ENCODE measurements at regions of chr2 and their contacts with region 1.

Region 1: DNA sequence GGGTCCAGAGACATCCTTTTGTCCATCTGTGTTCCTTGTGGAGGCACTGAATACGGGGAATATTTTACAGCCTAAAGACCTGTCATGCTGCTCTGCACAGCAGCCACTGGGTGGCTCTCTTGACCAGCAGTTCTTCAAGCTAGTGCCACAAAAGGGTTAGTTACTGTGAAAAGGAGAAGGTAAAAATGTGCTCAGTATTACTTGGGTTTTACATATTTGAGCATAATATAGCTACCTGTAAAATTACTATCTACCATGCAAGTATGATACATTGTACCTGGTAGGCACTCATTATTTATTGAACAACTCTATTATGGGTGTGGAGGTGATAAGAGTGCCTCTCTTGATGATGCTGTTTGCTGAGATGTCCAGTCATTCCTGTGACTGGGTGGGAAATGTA is 23.6 kb downstream of the FZD5 start:
- DNase-seq: no peak
- ATAC-seq: peak; percentile 97
- H3K4me3 ChIP-seq: no peak overlapping the region
- H3K27ac ChIP-seq: no peak overlapping the region
- H3K4me1 ChIP-seq: no peaks in the 10 kb centered on the region
- H3K27me3 ChIP-seq: no peaks in the 10 kb centered on the region
- CTCF ChIP-seq: peak; percentile 91 to 93 (median 91)
- EP300 ChIP-seq: no peak
- POLR2A ChIP-seq: no peak
- RAD21 ChIP-seq: peak; percentile 100

Region 2: DNA sequence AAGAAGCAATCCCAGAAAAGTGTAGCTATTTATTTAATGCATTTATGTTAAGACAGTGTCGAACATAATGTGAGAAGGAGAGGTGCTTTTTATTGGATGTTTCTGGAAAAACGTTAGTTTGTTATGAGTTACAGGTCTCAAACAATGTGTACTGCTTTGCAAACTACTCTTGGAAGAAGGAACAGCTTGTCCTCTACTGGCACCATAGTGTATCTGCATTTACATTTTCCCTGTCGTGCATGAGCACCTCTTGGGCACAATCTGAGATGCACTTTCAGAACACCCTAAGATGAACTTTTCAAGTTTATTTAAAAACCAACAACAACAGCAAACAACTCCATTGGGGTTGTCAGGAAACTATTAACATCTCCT is 11.9 kb before region 1 on chr2:
- CTCF ChIA-PET with region 1: interaction called, 19 read pairs
- POLR2A ChIA-PET with region 1: no interaction called
- RAD21 ChIA-PET with region 1: interaction called, 13 read pairs
- SMC1A ChIA-PET with region 1: interaction called, 17 read pairs
- in situ Hi-C with region 1: no loop called
- intact Hi-C with region 1: no loop called
- DNase-seq: no peak
- ATAC-seq: peak; percentile 55
- H3K4me3 ChIP-seq: no peak overlapping the region
- H3K27ac ChIP-seq: no peak overlapping the region
- H3K4me1 ChIP-seq: no peaks in the 10 kb centered on the region
- H3K27me3 ChIP-seq: no peaks in the 10 kb centered on the region
- CTCF ChIP-seq: peak; percentile 42 to 58 (median 46); a peak in 4 of 6 replicates
- EP300 ChIP-seq: no peak
- POLR2A ChIP-seq: no peak
- RAD21 ChIP-seq: peak; percentile 58

Region 3: GRCh38 chr2:207833251-207833751 is 87.2 kb after region 1 on chr2:
- CTCF ChIA-PET with region 1: no interaction called
- POLR2A ChIA-PET with region 1: no interaction called
- RAD21 ChIA-PET with region 1: no interaction called
- SMC1A ChIA-PET with region 1: no interaction called
- in situ Hi-C with region 1: no loop called
- intact Hi-C with region 1: no loop called
- DNase-seq: peak; percentile 31
- ATAC-seq: peak; percentile 99
- H3K4me3 ChIP-seq: no peak overlapping the region
- H3K27ac ChIP-seq: no peak overlapping the region
- H3K4me1 ChIP-seq: peaks cover 11% of the 10 kb centered on the region
- H3K27me3 ChIP-seq: no peaks in the 10 kb centered on the region
- CTCF ChIP-seq: no peak
- EP300 ChIP-seq: no peak
- POLR2A ChIP-seq: no peak
- RAD21 ChIP-seq: no peak

Region 4: GRCh38 chr2:207974216-207974605 is 228.1 kb after region 1 on chr2:
- CTCF ChIA-PET with region 1: interaction called, 183 read pairs
- POLR2A ChIA-PET with region 1: interaction called, 4 read pairs
- RAD21 ChIA-PET with region 1: interaction called, 115 read pairs
- SMC1A ChIA-PET with region 1: interaction called, 190 read pairs
- in situ Hi-C with region 1: loop called (anchors 10 kb)
- intact Hi-C with region 1: loop called (anchors 1 kb)
- DNase-seq: no peak
- ATAC-seq: no peak
- H3K4me3 ChIP-seq: no peak overlapping the region
- H3K27ac ChIP-seq: no peak overlapping the region
- H3K4me1 ChIP-seq: 0 out of 2 replicates have a peak, but pooled peaks cover 3% of the 10 kb centered on the region
- H3K27me3 ChIP-seq: no peaks in the 10 kb centered on the region
- CTCF ChIP-seq: no peak
- EP300 ChIP-seq: no peak
- POLR2A ChIP-seq: no peak
- RAD21 ChIP-seq: no peak

Region 5: DNA sequence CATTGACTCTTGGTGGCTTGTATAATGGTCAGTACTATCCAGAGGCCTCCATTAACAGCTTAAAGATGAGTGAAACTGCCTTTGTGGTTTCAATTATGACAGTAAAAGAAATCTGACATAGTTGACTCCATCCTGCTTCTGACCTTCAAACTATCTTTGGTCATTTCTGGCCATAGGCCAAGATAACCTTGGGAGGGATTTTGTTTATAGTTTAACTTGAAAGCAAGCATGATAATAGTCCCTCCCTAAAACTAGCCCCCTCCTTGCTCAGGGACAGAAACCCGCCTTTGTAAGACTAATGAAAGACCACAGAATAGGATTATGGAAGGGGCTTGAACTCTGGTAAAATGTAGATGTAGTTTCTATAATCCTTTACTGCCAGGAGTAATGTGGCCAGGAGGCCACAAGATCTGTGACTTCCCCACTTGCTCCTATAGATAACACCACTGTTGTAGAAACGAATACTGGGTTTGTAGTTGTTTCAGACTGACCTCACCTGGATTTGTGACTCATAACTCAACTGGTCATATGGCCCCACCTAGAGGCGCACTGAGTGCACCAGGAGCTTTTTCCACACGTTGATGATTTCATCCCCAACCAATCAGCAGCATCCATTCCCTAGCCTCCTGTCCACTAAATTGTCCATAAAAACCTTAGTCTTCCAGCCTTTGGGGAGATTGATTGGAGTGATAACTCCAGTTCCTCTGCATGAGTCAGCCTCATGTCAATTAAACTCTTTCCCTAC is 287.8 kb after region 1 on chr2:
- CTCF ChIA-PET with region 1: interaction called, 108 read pairs
- POLR2A ChIA-PET with region 1: no interaction called
- RAD21 ChIA-PET with region 1: interaction called, 26 read pairs
- SMC1A ChIA-PET with region 1: interaction called, 80 read pairs
- in situ Hi-C with region 1: loop called (anchors 5 kb)
- intact Hi-C with region 1: no loop called
- DNase-seq: no peak
- ATAC-seq: peak; percentile 92
- H3K4me3 ChIP-seq: no peak overlapping the region
- H3K27ac ChIP-seq: no peak overlapping the region
- H3K4me1 ChIP-seq: peaks cover 8% of the 10 kb centered on the region
- H3K27me3 ChIP-seq: no peaks in the 10 kb centered on the region
- CTCF ChIP-seq: peak; percentile 54 to 74 (median 69); a peak in 5 of 6 replicates
- EP300 ChIP-seq: 0 out of 4 replicates have a peak, but pooled peaks of 1 of the 2 experiments have one; percentile 24
- POLR2A ChIP-seq: no peak
- RAD21 ChIP-seq: peak; percentile 81

Region 6: GRCh38 chr2:208072250-208072892 is 326.2 kb after region 1 on chr2:
- CTCF ChIA-PET with region 1: interaction called, 17 read pairs
- POLR2A ChIA-PET with region 1: no interaction called
- RAD21 ChIA-PET with region 1: interaction called, 26 read pairs
- SMC1A ChIA-PET with region 1: interaction called, 25 read pairs
- in situ Hi-C with region 1: loop called (anchors 10 kb)
- intact Hi-C with region 1: loop called (anchors 1 kb)
- DNase-seq: peak; percentile 19
- ATAC-seq: peak; percentile 97
- H3K4me3 ChIP-seq: no peak overlapping the region
- H3K27ac ChIP-seq: no peak overlapping the region
- H3K4me1 ChIP-seq: no peaks in the 10 kb centered on the region
- H3K27me3 ChIP-seq: no peaks in the 10 kb centered on the region
- CTCF ChIP-seq: peak; percentile 79 to 83 (median 80)
- EP300 ChIP-seq: no peak
- POLR2A ChIP-seq: no peak
- RAD21 ChIP-seq: peak; percentile 92

Measured in GM12878 (cell line).